CD8-positive, alpha-beta T cell (primary cell): ENCODE measurements at regions of chr3 and their contacts with region 1.

Region 1: GRCh38 chr3:46325645-46326585 is 28.0 kb upstream of the CCR2 start:
- DNase-seq: peak in 2 of 9 experiments; percentile 7 to 20
- ATAC-seq: no peak
- H3K4me3 ChIP-seq: no peak overlapping the region
- H3K4me3 Mint-ChIP-seq: no peak overlapping the region
- H3K27ac ChIP-seq: no peak overlapping the region
- H3K27ac Mint-ChIP-seq: peak overlapping the region; percentile 16
- H3K4me1 ChIP-seq: no peaks in the 10 kb centered on the region
- H3K4me1 Mint-ChIP-seq: peaks cover 4% of the 10 kb centered on the region
- H3K27me3 ChIP-seq: no peaks in the 10 kb centered on the region
- H3K27me3 Mint-ChIP-seq: no peaks in the 10 kb centered on the region
- CTCF ChIP-seq: no peak

Region 2: GRCh38 chr3:46312991-46313390 is 12.9 kb before region 1 on chr3:
- CTCF ChIA-PET with region 1: interaction called, 5 read pairs
- POLR2A ChIA-PET with region 1: no interaction called
- intact Hi-C with region 1: loop called in 1 of 2 experiments (anchors 2 kb)
- DNase-seq: peak in 1 of 9 experiments; percentile 24
- ATAC-seq: no peak
- H3K4me3 ChIP-seq: no peak overlapping the region
- H3K4me3 Mint-ChIP-seq: no peak overlapping the region
- H3K27ac ChIP-seq: no peak overlapping the region
- H3K27ac Mint-ChIP-seq: no peak overlapping the region
- H3K4me1 ChIP-seq: no peaks in the 10 kb centered on the region
- H3K4me1 Mint-ChIP-seq: no peaks in the 10 kb centered on the region
- H3K27me3 ChIP-seq: no peaks in the 10 kb centered on the region
- H3K27me3 Mint-ChIP-seq: no peaks in the 10 kb centered on the region
- CTCF ChIP-seq: no peak

Region 3: DNA sequence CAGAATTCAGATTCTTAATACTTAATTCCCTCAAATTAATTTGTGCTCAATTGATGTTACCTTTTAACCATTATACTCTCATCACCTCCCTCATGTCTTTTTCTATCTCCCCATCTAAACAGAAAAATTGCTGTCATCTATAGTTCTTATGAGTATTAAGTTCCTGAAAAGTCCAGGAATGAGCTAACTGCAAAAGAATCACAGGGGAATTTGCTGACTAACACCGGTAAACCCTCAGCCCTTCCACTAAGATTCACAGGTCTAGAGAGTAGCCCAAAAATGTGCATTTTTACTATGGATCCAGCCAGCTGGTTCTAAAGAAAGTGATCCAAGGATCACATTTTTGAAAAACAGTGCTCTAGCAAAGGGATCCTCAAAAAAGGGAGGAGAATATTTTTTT is 771.0 kb after region 1 on chr3:
- CTCF ChIA-PET with region 1: no interaction called
- POLR2A ChIA-PET with region 1: no interaction called
- intact Hi-C with region 1: no loop called
- DNase-seq: no peak
- ATAC-seq: no peak
- H3K4me3 ChIP-seq: no peak overlapping the region
- H3K4me3 Mint-ChIP-seq: no peak overlapping the region
- H3K27ac ChIP-seq: no peak overlapping the region
- H3K27ac Mint-ChIP-seq: peak overlapping the region; percentile 33
- H3K4me1 ChIP-seq: no peaks in the 10 kb centered on the region
- H3K4me1 Mint-ChIP-seq: peaks cover 2% of the 10 kb centered on the region
- H3K27me3 ChIP-seq: no peaks in the 10 kb centered on the region
- H3K27me3 Mint-ChIP-seq: no peaks in the 10 kb centered on the region
- CTCF ChIP-seq: no peak